MCF 10A (cell line): ENCODE measurements at regions of chr6 and their contacts with region 1.

Region 1: DNA sequence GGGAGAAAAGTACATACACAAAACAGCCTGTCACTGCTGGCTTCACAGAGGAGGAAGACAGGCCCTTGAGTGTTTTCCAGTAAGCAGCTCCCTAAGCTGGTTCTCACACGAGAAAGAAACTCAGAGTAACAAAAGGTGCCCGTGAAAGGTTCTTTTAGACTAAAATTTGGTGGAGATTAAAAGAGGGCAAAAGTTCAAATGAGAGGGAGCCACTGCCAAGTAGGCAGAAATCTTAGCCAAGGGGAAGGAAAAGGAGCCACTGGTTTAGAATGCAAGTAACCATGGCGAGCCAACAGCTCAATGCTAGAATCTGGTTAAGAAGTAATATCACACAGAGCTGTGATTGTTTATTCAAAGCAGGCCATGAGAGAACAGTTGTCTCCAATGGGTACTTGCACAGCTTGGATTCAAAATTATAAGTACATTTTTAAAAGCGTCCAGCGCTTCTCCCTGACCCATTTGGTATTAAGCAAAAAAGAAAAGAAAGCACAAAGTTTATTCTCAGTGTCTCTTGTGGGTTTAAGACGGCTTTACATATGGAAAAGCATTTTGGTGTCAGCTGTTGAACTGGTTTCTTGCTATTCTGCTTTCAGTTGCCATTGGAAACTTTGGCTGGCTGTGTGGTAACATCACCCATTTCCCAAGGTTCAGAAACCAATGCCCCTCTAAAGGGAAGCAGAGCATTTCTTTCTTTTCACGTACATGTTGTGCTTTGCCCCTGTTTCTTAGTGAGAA is 648.5 kb downstream of the RNF144B start:
- DNase-seq: no peak
- H3K4me3 Mint-ChIP-seq: no peak overlapping the region
- H3K27ac Mint-ChIP-seq: no peak overlapping the region
- H3K4me1 Mint-ChIP-seq: no peaks in the 10 kb centered on the region
- H3K27me3 Mint-ChIP-seq: no peaks in the 10 kb centered on the region
- CTCF ChIP-seq: no peak

Region 2: GRCh38 chr6:19052219-19052618 is 16.6 kb after region 1 on chr6:
- CTCF ChIA-PET with region 1: no interaction called
- POLR2A ChIA-PET with region 1: no interaction called
- intact Hi-C with region 1: loop called (anchors 1 kb)
- DNase-seq: peak; percentile 18
- H3K4me3 Mint-ChIP-seq: no peak overlapping the region
- H3K27ac Mint-ChIP-seq: no peak overlapping the region
- H3K4me1 Mint-ChIP-seq: peaks cover 5% of the 10 kb centered on the region
- H3K27me3 Mint-ChIP-seq: no peaks in the 10 kb centered on the region
- CTCF ChIP-seq: no peak